ENCODE measurements at regions of chr3 and their contacts with region 1.

Region 1: DNA sequence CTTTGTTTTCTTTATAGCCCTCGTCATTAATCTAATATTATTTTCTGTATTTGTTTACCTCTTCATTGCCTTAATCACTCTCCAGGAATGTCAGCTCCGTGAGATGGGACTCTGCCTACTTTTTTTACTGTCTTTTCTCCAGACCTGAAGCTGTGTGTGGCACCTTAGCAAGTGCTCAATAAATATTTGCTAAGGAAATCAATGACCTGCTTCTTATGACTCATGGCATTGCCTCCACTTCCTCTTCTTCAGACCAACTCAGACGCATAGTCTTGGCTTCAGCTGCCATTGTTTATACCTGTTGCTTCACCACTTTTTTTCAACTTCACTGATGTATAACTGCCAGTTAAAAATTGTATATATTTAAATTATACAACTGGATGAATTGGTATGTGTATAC is 218.5 kb upstream of the CMC1 start:
- DNase-seq: peak; percentile 93
- ATAC-seq: peak; percentile 83
- H3K4me3 ChIP-seq: no peak overlapping the region
- H3K27ac ChIP-seq: peak overlapping the region; percentile 73
- H3K4me1 ChIP-seq: peaks cover 22% of the 10 kb centered on the region
- H3K27me3 ChIP-seq: no peaks in the 10 kb centered on the region
- CTCF ChIP-seq: no peak

Region 2: GRCh38 chr3:28050895-28051294 is 28.0 kb after region 1 on chr3:
- CTCF ChIA-PET with region 1: no interaction called
- POLR2A ChIA-PET with region 1: no interaction called
- intact Hi-C with region 1: loop called (anchors 2 kb)
- DNase-seq: peak; percentile 97
- ATAC-seq: peak; percentile 69
- H3K4me3 ChIP-seq: no peak overlapping the region
- H3K27ac ChIP-seq: peak overlapping the region; percentile 58
- H3K4me1 ChIP-seq: peaks cover 55% of the 10 kb centered on the region
- H3K27me3 ChIP-seq: no peaks in the 10 kb centered on the region
- CTCF ChIP-seq: no peak

Measured in PC-3 (cell line).